ENCODE measurements at regions of chr5 and their contacts with region 1.

Region 1: DNA sequence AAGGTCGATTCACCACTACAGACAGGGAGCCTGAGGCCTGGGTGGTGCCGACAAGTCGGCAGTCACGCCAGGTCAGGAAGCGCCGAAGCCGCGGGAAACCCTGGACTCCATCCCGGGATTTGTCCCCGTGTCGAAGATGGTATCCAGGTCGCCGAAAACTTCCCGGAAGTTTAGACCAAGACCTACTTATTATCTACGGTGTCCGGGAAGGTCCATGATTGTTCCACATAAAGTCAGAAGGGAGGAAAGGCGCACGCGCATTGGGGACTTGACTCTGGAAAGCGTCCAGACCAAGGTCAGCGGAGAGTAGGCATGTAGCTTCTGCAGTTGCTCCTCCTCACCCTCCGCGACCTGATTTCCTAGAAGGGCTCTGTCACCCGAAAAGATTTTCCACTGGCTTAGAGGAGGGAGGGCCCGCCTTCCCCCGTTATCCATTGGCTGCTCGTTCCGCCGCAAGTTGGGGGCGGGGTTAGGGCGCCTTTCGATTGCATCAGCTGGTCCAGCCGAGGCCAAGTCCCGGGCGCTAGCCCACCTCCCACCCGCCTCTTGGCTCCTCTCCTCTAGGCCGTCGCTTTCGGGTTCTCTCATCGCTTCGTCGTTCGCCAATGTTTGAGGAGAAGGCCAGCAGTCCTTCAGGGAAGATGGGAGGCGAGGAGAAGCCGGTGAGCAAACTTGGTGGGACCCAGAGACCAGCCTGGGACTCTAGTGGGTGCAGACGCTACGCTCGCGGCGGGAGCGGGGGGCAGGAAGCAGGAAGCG is at the start of gene TARS1:
- DNase-seq: peak; percentile 97
- H3K4me3 Mint-ChIP-seq: no peak within 1 kb of the TSS
- H3K27ac Mint-ChIP-seq: no peak within 1 kb of the TSS
- H3K4me1 Mint-ChIP-seq: peaks cover 24% of the 10 kb centered on the region
- H3K27me3 Mint-ChIP-seq: no peaks in the 10 kb centered on the region
- total RNA-seq, gene TARS1: 240 to 248 TPM

Region 2: DNA sequence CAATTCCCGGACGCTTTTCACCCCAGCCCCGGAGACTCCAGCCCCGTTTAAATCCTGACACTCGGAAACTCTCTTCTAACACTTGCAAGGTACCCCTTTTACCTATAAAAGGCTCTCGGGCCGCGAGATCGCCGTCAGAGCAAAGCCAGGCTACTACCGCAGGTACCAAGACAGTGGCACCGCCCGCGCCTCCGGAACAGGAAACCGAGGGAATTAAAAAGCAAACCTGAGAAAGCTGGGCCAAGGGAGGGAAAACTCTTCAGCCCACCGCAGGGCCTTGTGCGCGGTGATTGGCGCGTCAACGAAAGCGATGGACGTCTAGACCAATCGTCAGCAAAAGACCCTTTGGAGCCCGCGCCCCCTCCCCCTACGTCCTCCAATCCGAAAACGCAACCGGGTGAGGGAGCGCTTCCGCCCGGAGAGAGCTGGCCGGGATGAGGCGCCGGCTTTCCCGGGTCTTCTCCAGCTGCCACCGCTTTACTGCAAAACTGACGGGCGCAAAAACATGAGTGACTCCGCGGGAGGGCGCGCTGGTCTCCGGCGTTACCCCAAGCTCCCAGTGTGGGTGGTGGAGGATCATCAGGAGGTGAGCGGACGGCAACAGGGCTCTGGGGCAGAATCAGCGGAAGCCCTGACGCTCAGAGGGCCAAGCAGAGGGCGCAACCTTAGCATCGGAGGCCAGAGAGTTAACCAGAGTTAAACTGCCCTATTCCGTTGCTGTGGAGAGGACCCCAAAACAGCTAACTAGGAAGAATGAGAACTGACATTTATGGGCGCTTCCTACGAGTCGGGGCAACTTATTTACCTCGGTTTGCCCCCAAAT is 1908.6 kb before region 1 on chr5 and contains the starts of genes C5orf22 and DROSHA:
- CTCF ChIA-PET with region 1: no interaction called
- POLR2A ChIA-PET with region 1: no interaction called
- intact Hi-C with region 1: loop called (anchors 2 kb)
- DNase-seq: peak; percentile 96
- H3K4me3 Mint-ChIP-seq: peak within 1 kb of the TSS; percentile 94
- H3K27ac Mint-ChIP-seq: peak within 1 kb of the TSS; percentile 92
- H3K4me1 Mint-ChIP-seq: peaks cover 48% of the 10 kb centered on the region
- H3K27me3 Mint-ChIP-seq: no peaks in the 10 kb centered on the region
- total RNA-seq, gene C5orf22: 25.1 to 29.0 TPM
- total RNA-seq, gene DROSHA: 59.6 to 66.1 TPM

Region 3: DNA sequence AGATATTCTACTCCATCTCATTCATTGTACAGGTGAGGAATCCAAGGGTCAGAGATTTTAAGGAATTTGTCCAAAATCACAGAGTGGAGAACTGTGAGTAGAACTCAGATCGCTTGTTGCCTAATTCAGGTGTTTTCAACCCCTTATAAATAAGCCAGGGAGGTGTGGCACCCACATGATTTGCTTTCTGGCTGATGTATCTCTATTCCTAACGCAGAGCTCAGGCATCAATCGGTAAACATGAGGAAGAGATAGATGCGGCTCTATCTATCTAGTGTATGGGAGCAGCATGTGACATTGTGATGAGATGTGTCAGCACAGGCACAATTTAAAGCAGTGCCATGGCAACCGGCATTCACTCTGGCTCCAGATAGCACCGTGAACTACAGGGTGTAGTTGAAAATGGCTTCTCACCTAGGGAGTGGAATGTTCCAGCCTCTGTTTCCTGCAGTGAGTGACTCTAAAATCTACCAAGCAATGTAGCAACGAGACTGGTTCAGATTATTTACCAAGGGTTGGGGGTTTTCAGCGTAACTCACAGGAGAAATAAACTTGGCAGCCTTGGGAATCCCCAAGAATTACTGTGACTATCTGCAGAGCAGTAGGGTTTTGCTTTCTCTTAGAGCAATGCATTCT is 908.7 kb before region 1 on chr5:
- CTCF ChIA-PET with region 1: no interaction called
- POLR2A ChIA-PET with region 1: no interaction called
- intact Hi-C with region 1: loop called (anchors 5 kb)
- DNase-seq: peak; percentile 81
- H3K4me3 Mint-ChIP-seq: peak overlapping the region; percentile 91
- H3K27ac Mint-ChIP-seq: peak overlapping the region; percentile 99
- H3K4me1 Mint-ChIP-seq: peaks cover 56% of the 10 kb centered on the region
- H3K27me3 Mint-ChIP-seq: no peaks in the 10 kb centered on the region

Region 4: GRCh38 chr5:33524476-33524875 is 83.8 kb after region 1 on chr5:
- CTCF ChIA-PET with region 1: interaction called, 3 read pairs
- POLR2A ChIA-PET with region 1: no interaction called
- intact Hi-C with region 1: loop called (anchors 5 kb)
- DNase-seq: no peak
- H3K4me3 Mint-ChIP-seq: no peak overlapping the region
- H3K27ac Mint-ChIP-seq: no peak overlapping the region
- H3K4me1 Mint-ChIP-seq: no peaks in the 10 kb centered on the region
- H3K27me3 Mint-ChIP-seq: peaks cover 1% of the 10 kb centered on the region

Region 5: GRCh38 chr5:33857037-33857436 is 416.4 kb after region 1 on chr5:
- CTCF ChIA-PET with region 1: no interaction called
- POLR2A ChIA-PET with region 1: no interaction called
- intact Hi-C with region 1: no loop called
- DNase-seq: peak; percentile 27
- H3K4me3 Mint-ChIP-seq: no peak overlapping the region
- H3K27ac Mint-ChIP-seq: no peak overlapping the region
- H3K4me1 Mint-ChIP-seq: peaks cover 22% of the 10 kb centered on the region
- H3K27me3 Mint-ChIP-seq: peaks cover 3% of the 10 kb centered on the region

Region 6: DNA sequence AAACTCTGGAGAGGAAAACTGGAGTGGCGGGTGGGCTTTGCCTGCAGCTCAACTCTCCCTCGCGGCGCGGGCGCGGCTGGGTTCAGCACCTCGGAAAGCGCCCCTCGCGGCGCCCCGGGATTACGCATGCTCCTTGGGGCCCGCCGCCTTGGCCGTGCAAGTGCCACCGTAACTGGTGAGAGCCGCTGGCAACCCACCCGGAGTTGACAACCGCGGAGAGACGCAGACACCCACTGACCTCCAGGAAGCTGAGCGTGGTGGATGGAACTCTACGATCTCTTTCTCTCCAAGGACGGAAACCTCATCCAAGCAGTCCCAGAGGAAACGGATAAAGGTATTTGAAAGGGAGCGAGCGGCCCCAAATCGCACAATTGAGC is 495.3 kb after region 1 on chr5:
- CTCF ChIA-PET with region 1: interaction called, 44 read pairs
- POLR2A ChIA-PET with region 1: no interaction called
- intact Hi-C with region 1: loop called (anchors 1 kb)
- DNase-seq: peak; percentile 61
- H3K4me3 Mint-ChIP-seq: no peak overlapping the region
- H3K27ac Mint-ChIP-seq: no peak overlapping the region
- H3K4me1 Mint-ChIP-seq: peaks cover 2% of the 10 kb centered on the region
- H3K27me3 Mint-ChIP-seq: peaks cover 48% of the 10 kb centered on the region

Region 7: DNA sequence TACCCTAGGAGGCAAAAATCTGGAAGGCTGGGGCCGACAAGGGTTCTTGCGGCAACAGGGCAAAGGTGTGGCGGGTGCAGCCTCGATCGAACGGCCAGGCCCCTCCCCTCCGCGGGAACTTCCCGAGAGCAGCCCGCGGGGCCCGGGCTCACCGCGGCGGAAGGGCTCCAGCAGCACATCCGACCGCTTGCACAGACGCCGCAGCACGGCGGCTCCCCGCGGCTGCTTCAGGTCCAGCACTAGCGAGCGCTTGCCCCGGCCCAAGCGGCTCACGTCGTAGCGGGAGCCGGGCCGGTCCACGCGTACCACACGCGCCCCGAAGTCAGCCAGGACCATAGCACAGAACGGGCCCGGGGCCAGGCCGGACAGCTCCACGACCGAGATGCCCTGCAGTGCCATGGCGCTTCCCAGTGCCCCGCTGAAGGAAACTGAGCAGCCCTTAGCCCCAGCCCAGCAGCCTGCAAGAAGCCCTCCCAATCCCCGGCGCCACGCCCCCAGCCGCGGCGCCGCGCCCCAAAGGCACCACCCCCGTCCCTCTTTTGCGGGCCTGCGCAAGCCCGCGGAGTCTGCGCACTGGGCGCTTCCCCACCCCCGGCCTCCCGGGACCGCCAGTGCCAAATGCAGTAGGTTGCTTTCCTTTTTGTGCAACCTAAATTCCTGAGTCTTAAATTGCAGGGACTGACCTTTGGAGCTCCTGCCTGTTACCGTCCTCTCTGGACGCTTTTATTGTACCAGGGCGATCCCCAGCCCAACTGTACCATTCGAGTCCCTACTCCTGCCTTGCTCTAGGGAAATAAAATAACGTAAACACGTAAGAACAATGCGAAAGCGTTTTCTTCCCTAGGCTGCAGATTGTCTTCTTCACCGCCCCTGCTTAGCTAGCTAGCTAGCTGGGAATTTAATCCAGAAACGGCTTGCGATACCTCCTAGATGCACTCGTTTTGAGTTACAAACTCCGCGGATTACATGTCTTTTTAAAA is 567.2 kb after region 1 on chr5 and contains the start of gene AMACR:
- CTCF ChIA-PET with region 1: no interaction called
- POLR2A ChIA-PET with region 1: no interaction called
- intact Hi-C with region 1: loop called (anchors 1 kb)
- DNase-seq: peak; percentile 91
- H3K4me3 Mint-ChIP-seq: peak within 1 kb of the TSS; percentile 91
- H3K27ac Mint-ChIP-seq: peak within 1 kb of the TSS; percentile 93
- H3K4me1 Mint-ChIP-seq: peaks cover 32% of the 10 kb centered on the region
- H3K27me3 Mint-ChIP-seq: no peaks in the 10 kb centered on the region
- total RNA-seq, gene AMACR: 11.5 TPM

Region 8: DNA sequence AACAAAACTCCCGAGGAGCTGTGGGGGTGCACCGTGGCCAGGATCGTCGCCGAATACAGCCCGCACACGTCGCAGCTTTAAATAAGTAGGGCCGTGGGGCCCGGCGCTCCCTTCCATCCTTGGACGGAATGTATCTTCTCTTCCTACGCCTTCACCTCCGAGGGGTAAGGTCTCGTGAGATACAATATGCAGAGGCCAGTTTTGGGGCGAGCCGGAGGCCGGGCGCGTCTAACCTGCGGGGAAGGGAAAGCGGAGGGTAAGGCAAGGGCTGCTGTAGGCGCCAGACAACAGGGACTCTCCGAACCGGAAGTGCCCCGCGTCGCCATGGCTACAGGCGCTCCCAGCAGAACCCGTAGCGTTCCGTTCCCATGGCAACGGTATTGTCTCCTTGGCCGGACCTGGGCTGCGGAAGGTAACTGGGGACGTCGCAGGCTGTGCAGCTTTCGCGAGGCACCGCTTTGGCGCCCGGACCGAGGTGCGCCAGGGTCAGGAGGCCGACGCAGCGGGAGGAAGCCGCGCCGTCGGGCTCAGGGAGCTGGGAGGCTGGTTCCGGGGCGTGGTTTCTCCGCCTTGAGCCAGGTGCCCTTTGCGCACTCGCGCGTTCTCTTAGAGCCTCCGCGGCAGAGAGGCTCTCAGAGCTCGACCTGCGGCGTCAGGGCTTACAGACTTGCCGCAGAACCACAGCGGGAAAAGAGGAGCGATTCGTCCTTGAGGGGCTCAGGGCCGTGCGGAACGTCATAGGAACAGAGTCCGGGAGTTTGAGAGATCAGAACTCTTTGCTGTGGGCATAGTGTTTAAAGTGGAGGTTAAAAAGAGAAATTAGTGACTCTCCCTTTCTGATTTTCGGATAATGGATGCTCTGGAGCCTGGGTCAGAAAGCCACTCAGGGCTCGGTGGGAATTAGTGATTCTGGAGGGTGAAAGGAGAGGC is 1398.4 kb after region 1 on chr5 and contains the start of gene TTC23L:
- CTCF ChIA-PET with region 1: no interaction called
- POLR2A ChIA-PET with region 1: no interaction called
- intact Hi-C with region 1: loop called (anchors 5 kb)
- DNase-seq: peak; percentile 93
- H3K4me3 Mint-ChIP-seq: peak within 1 kb of the TSS; percentile 90
- H3K27ac Mint-ChIP-seq: peak within 1 kb of the TSS; percentile 68
- H3K4me1 Mint-ChIP-seq: peaks cover 9% of the 10 kb centered on the region
- H3K27me3 Mint-ChIP-seq: no peaks in the 10 kb centered on the region
- total RNA-seq, gene TTC23L: 0.07 TPM in 1 of 2 experiments, not detected in the other

Measured in activated CD4-positive, alpha-beta memory T cell treated with anti-CD3 and anti-CD28 coated beads for 36 hours (primary cell).